IMR-90 (cell line): ENCODE measurements at regions of chr20 and their contacts with region 1.

Region 1: DNA sequence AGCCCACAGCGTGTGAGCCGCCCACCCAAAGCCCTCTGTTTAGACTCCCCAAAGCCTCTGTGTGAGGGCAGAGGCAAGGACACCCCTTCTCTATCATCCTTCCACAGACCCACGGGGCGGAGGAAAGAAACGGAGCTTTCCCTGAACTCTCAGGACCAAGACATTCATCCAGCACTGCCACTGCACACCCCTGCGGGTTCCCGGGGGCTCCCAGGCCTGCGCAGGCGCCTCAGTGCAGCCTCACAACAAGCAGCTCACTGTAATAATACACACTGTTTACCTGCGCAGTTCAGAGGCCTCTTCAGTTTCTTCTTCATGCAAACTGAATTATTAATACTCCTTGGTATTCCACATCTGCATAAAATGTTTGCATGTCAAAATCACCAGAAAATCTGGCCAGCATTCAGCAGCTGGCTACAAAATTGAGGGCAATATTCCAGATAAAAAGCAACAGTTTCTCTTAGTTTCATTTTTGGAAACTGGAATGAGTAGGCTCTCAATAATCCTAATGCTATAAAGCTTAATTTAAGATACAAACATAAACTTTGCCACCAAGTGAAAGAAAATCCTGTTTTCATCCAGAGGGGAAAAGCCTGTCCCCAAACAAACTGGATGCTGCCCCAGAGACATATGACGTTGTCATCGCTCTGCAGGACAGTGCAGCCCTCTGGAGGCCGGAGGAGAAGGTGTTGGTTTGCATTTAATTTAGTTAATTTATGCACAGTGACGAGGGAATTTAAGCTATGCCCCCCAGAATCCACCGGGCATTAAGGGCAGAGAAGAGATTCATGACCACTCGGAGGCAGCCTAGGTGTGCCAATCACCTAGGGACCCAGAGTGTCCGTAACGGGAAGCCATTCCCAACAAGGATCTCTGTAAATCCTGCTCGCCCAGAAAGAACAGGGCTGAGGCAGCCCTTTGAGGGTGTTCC is 45.3 kb downstream of the NINL start:
- DNase-seq: peak; percentile 52
- ATAC-seq: peak; percentile 50
- H3K4me3 ChIP-seq: no peak overlapping the region
- H3K27ac ChIP-seq: no peak overlapping the region; the same call in 1 of the 2 replicates
- H3K4me1 ChIP-seq: peaks cover 23% of the 10 kb centered on the region
- H3K27me3 ChIP-seq: no peaks in the 10 kb centered on the region
- CTCF ChIP-seq: peak; percentile 32; the same call in 1 of the 2 replicates
- POLR2A ChIP-seq: no peak
- RAD21 ChIP-seq: peak; percentile 31; the same call in 1 of the 2 replicates

Region 2: GRCh38 chr20:25310268-25310920 is 229.6 kb before region 1 on chr20:
- CTCF ChIA-PET with region 1: no interaction called
- POLR2A ChIA-PET with region 1: no interaction called
- dilution Hi-C with region 1: no loop called
- in situ Hi-C with region 1: loop called (anchors 25 kb)
- intact Hi-C with region 1: no loop called
- DNase-seq: peak; percentile 96
- ATAC-seq: peak; percentile 90
- H3K4me3 ChIP-seq: peak overlapping the region; percentile 27; the same call in 1 of the 2 replicates
- H3K27ac ChIP-seq: peak overlapping the region; percentile 94
- H3K4me1 ChIP-seq: peaks cover 28% of the 10 kb centered on the region
- H3K27me3 ChIP-seq: no peaks in the 10 kb centered on the region
- CTCF ChIP-seq: peak; percentile 77
- POLR2A ChIP-seq: peak; percentile 76; the same call in 1 of the 2 replicates
- RAD21 ChIP-seq: peak; percentile 78

Region 3: DNA sequence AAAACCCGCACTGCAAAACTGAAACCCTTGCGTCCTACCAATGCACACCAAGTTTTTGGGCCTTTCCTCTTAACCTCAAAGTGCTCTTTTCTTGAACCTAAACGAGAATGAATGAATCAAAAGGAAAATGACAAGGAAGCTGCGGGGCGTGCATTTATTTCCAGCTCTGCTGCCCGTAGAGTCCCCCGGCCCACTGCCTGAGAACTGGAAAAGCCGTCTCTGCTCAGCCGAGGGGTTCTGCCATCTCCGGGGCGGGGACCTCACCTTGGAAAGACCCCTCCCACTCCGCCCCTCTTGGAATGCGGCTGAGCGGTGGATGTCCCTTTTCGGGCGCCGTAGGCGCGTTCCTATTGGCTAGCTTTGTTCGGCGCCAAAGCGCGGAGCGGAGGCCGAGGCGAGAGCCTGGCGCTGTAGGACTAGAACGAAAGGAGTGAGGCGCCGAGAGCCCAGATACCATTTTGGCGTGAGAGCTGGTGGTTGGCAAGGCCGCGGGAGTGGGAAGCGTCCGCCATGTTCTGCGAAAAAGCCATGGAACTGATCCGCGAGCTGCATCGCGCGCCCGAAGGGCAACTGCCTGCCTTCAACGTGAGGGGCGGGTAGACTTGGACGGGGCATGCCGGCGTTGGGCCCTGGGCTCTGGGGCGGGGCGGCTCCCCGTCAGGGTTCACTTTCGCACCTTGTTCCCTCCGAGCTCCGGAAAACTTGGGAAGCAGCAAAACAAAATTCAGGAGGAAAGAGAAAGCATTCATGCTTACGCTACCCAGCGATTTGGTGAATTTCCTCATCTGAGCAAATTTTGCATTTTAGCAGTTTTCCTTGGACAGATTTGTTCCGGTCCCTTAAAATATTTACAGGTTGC is 132.5 kb before region 1 on chr20 and contains the start of gene GINS1:
- CTCF ChIA-PET with region 1: no interaction called
- POLR2A ChIA-PET with region 1: no interaction called
- dilution Hi-C with region 1: no loop called
- in situ Hi-C with region 1: no loop called
- intact Hi-C with region 1: loop called (anchors 5 kb)
- DNase-seq: peak; percentile 85
- ATAC-seq: peak; percentile 99
- H3K4me3 ChIP-seq: peak within 1 kb of the TSS; percentile 94
- H3K27ac ChIP-seq: peak within 1 kb of the TSS; percentile 72
- H3K4me1 ChIP-seq: peaks cover 1% of the 10 kb centered on the region
- H3K27me3 ChIP-seq: no peaks in the 10 kb centered on the region
- CTCF ChIP-seq: no peak
- POLR2A ChIP-seq: peak; percentile 71
- RAD21 ChIP-seq: no peak
- total RNA-seq, gene GINS1: 6.6 and 12.2 TPM in 2 replicates

Region 4: GRCh38 chr20:25592135-25592852 is 52.3 kb after region 1 on chr20:
- CTCF ChIA-PET with region 1: no interaction called
- POLR2A ChIA-PET with region 1: no interaction called
- dilution Hi-C with region 1: no loop called
- in situ Hi-C with region 1: no loop called
- intact Hi-C with region 1: loop called (anchors 10 kb)
- DNase-seq: peak; percentile 39
- ATAC-seq: peak; percentile 58
- H3K4me3 ChIP-seq: no peak overlapping the region
- H3K27ac ChIP-seq: peak overlapping the region; percentile 28; the same call in 1 of the 2 replicates
- H3K4me1 ChIP-seq: peaks cover 6% of the 10 kb centered on the region; the same call in 1 of the 2 replicates
- H3K27me3 ChIP-seq: no peaks in the 10 kb centered on the region
- CTCF ChIP-seq: no peak
- POLR2A ChIP-seq: no peak
- RAD21 ChIP-seq: no peak